ENCODE measurements at regions of chr4 and their contacts with region 1.

Region 1: GRCh38 chr4:113278324-113278934 is 229.0 kb downstream of the ANK2 start:
- DNase-seq: peak; percentile 79
- ATAC-seq: peak; percentile 99
- H3K4me3 ChIP-seq: no peak overlapping the region
- H3K27ac ChIP-seq: no peak overlapping the region
- H3K4me1 ChIP-seq: no peaks in the 10 kb centered on the region
- H3K27me3 ChIP-seq: peaks cover 7% of the 10 kb centered on the region
- CTCF ChIP-seq: peak; percentile 85
- POLR2A ChIP-seq: no peak
- RAD21 ChIP-seq: peak; percentile 88

Region 2: GRCh38 chr4:113292371-113293042 is 14.1 kb after region 1 on chr4:
- CTCF ChIA-PET with region 1: interaction called, 11 read pairs
- POLR2A ChIA-PET with region 1: no interaction called
- dilution Hi-C with region 1: no loop called
- in situ Hi-C with region 1: no loop called
- intact Hi-C with region 1: no loop called
- DNase-seq: peak; percentile 71
- ATAC-seq: peak; percentile 82
- H3K4me3 ChIP-seq: no peak overlapping the region
- H3K27ac ChIP-seq: peak overlapping the region; percentile 66; the same call in 1 of the 2 replicates
- H3K4me1 ChIP-seq: peaks cover 5% of the 10 kb centered on the region
- H3K27me3 ChIP-seq: no peaks in the 10 kb centered on the region
- CTCF ChIP-seq: no peak
- POLR2A ChIP-seq: no peak
- RAD21 ChIP-seq: no peak

Region 3: GRCh38 chr4:113368056-113368455 is 89.6 kb after region 1 on chr4:
- CTCF ChIA-PET with region 1: no interaction called
- POLR2A ChIA-PET with region 1: no interaction called
- dilution Hi-C with region 1: no loop called
- in situ Hi-C with region 1: no loop called
- intact Hi-C with region 1: no loop called
- DNase-seq: peak; percentile 97
- ATAC-seq: peak; percentile 97
- H3K4me3 ChIP-seq: no peak overlapping the region
- H3K27ac ChIP-seq: no peak overlapping the region
- H3K4me1 ChIP-seq: peaks cover 2% of the 10 kb centered on the region
- H3K27me3 ChIP-seq: no peaks in the 10 kb centered on the region; the same call in 1 of the 2 replicates
- CTCF ChIP-seq: no peak
- POLR2A ChIP-seq: no peak
- RAD21 ChIP-seq: no peak

Region 4: GRCh38 chr4:113547487-113548042 is 269.1 kb after region 1 on chr4:
- CTCF ChIA-PET with region 1: no interaction called
- POLR2A ChIA-PET with region 1: no interaction called
- dilution Hi-C with region 1: no loop called
- in situ Hi-C with region 1: no loop called
- intact Hi-C with region 1: loop called (anchors 10 kb)
- DNase-seq: peak; percentile 95
- ATAC-seq: peak; percentile 99
- H3K4me3 ChIP-seq: no peak overlapping the region
- H3K27ac ChIP-seq: no peak overlapping the region
- H3K4me1 ChIP-seq: no peaks in the 10 kb centered on the region
- H3K27me3 ChIP-seq: no peaks in the 10 kb centered on the region
- CTCF ChIP-seq: peak; percentile 90
- POLR2A ChIP-seq: no peak
- RAD21 ChIP-seq: peak; percentile 78

Region 5: GRCh38 chr4:114386637-114387233 is 1108.3 kb after region 1 on chr4:
- CTCF ChIA-PET with region 1: no interaction called
- POLR2A ChIA-PET with region 1: no interaction called
- dilution Hi-C with region 1: no loop called
- in situ Hi-C with region 1: loop called (anchors 25 kb)
- intact Hi-C with region 1: loop called (anchors 1 kb)
- DNase-seq: peak; percentile 60
- ATAC-seq: peak; percentile 51; the same call in 1 of the 2 replicates
- H3K4me3 ChIP-seq: no peak overlapping the region
- H3K27ac ChIP-seq: no peak overlapping the region
- H3K4me1 ChIP-seq: peaks cover 4% of the 10 kb centered on the region; the same call in 1 of the 2 replicates
- H3K27me3 ChIP-seq: peaks cover 18% of the 10 kb centered on the region
- CTCF ChIP-seq: peak; percentile 85
- POLR2A ChIP-seq: no peak
- RAD21 ChIP-seq: peak; percentile 85

Measured in IMR-90 (cell line).